ENCODE measurements at regions of chr2 and their contacts with region 1.

Region 1: DNA sequence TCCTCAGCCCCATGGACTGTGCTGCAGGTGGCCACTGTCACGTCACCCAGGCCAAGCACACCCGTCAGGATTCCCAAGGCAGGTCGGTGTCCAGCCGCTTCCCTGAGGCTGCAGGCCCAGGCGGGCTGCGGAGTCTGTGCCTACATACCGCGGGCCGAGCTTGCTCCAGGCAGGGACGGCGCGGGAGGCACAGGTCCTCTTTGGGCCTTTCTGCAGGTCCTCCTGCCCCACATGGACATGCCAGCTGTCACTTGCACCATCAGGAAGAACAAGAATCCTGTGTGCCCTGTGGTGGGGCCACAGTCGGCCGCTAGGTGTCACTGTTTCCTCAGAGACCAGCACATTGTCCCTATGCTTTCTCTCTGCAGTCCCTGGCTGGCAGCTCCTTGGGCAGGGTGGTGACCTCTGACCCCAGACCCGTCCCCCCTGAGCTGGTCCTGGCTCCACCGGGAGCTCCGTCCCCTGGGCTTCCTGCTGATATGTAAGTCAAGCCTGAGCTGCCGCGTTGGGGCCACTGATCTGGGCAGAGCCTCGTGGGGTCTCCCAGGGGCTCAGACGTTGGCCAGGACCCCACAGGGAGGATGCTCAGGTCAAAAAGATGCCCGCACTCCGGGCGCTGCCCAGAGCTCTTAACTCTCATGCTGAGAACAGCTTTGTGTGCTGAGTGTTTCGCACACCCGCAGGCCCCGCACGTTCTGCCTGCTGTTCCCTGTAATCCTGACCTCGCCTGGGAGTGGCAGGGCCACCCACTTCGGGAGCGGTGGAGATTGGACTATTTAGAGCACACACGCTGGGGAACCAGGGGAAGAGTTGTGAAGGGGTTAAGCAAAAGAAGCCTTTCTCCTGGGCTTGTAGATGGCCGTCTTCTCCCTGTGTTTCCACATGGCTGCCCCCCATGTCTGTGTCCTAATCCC is 17.3 kb upstream of the AGXT start:
- H3K4me3 Mint-ChIP-seq: no peak overlapping the region
- H3K27ac Mint-ChIP-seq: no peak overlapping the region
- H3K4me1 Mint-ChIP-seq: no peaks in the 10 kb centered on the region
- H3K27me3 Mint-ChIP-seq: peaks cover 10% of the 10 kb centered on the region

Region 2: GRCh38 chr2:241069821-241070281 is 218.5 kb after region 1 on chr2:
- intact Hi-C with region 1: loop called (anchors 10 kb)
- H3K4me3 Mint-ChIP-seq: no peak overlapping the region
- H3K27ac Mint-ChIP-seq: no peak overlapping the region
- H3K4me1 Mint-ChIP-seq: no peaks in the 10 kb centered on the region
- H3K27me3 Mint-ChIP-seq: no peaks in the 10 kb centered on the region

Measured in dendritic cell treated with granulocyte-macrophage colony-stimulating factor and Interleukin-4, amounts not matched to agents 40 ng/mL and 50 ng/mL, for 4 days (primary cell).